H1 (cell line): ENCODE measurements at regions of chr2 and their contacts with region 1.

Region 1: GRCh38 chr2:101883863-101884262 is 107.9 kb upstream of the IL1R2 start:
- DNase-seq: no peak
- H3K4me3 ChIP-seq: no peak overlapping the region
- H3K27ac ChIP-seq: no peak overlapping the region
- H3K4me1 ChIP-seq: no peaks in the 10 kb centered on the region
- H3K27me3 ChIP-seq: no peaks in the 10 kb centered on the region
- CTCF ChIP-seq: peak in 2 of 3 experiments; percentile 44 to 57; a peak in 2 of 4 replicates
- EP300 ChIP-seq: no peak
- POLR2A ChIP-seq: no peak
- RAD21 ChIP-seq: peak; percentile 61 to 63

Region 2: DNA sequence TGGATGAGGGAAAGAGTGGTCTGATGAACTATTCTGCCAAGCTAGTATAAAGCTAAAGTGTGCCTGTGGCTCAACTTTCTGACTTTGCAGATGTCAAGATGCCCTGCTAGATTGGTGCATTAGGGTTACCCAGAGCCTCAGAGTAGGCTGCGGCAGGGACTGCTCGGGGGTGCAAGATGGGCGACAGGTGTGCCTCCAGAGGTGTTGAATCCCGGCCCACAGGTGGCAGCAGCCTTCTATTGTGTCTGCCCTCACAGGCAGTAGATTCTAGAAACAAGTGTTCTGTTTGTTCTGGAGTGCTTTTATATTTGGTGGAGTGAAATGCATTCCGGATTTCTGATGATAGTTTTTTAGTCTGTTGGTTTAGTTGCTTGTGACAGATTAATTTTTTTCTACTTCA is 23.7 kb before region 1 on chr2:
- CTCF ChIA-PET with region 1: interaction called, 16 read pairs
- POLR2A ChIA-PET with region 1: no interaction called
- DNase-seq: peak in 1 of 2 experiments; percentile 7
- H3K4me3 ChIP-seq: no peak overlapping the region
- H3K27ac ChIP-seq: no peak overlapping the region
- H3K4me1 ChIP-seq: no peaks in the 10 kb centered on the region; a peak in 1 of 7 replicates
- H3K27me3 ChIP-seq: no peaks in the 10 kb centered on the region
- CTCF ChIP-seq: peak; percentile 33 to 45 (median 41)
- EP300 ChIP-seq: no peak
- POLR2A ChIP-seq: no peak
- RAD21 ChIP-seq: peak; percentile 46 to 49; a peak in 3 of 4 replicates

Region 3: GRCh38 chr2:101873543-101873942 is 10.3 kb before region 1 on chr2:
- CTCF ChIA-PET with region 1: interaction called, 15 read pairs
- POLR2A ChIA-PET with region 1: no interaction called
- DNase-seq: no peak
- H3K4me3 ChIP-seq: no peak overlapping the region
- H3K27ac ChIP-seq: no peak overlapping the region
- H3K4me1 ChIP-seq: no peaks in the 10 kb centered on the region
- H3K27me3 ChIP-seq: no peaks in the 10 kb centered on the region
- CTCF ChIP-seq: peak in 1 of 3 experiments; percentile 29; a peak in 1 of 4 replicates
- EP300 ChIP-seq: no peak
- POLR2A ChIP-seq: no peak
- RAD21 ChIP-seq: peak; percentile 44 to 58

Region 4: GRCh38 chr2:101986804-101987740 is 103.2 kb after region 1 on chr2:
- CTCF ChIA-PET with region 1: interaction called, 14 read pairs
- POLR2A ChIA-PET with region 1: no interaction called
- DNase-seq: no peak
- H3K4me3 ChIP-seq: no peak overlapping the region
- H3K27ac ChIP-seq: no peak overlapping the region
- H3K4me1 ChIP-seq: peaks cover 0 to 9% (median 0%) of the 10 kb centered on the region in 4 experiments; a peak in 3 of 7 replicates
- H3K27me3 ChIP-seq: no peaks in the 10 kb centered on the region
- CTCF ChIP-seq: no peak
- EP300 ChIP-seq: no peak
- POLR2A ChIP-seq: no peak
- RAD21 ChIP-seq: no peak